ENCODE measurements at regions of chr5 and their contacts with region 1.

Region 1: GRCh38 chr5:127186657-127187056 is 103.9 kb upstream of the MEGF10 start:
- DNase-seq: peak; percentile 10
- H3K4me3 ChIP-seq: no peak overlapping the region
- H3K27ac ChIP-seq: no peak overlapping the region
- H3K4me1 ChIP-seq: no peaks in the 10 kb centered on the region
- H3K27me3 ChIP-seq: no peaks in the 10 kb centered on the region
- CTCF ChIP-seq: no peak

Region 2: DNA sequence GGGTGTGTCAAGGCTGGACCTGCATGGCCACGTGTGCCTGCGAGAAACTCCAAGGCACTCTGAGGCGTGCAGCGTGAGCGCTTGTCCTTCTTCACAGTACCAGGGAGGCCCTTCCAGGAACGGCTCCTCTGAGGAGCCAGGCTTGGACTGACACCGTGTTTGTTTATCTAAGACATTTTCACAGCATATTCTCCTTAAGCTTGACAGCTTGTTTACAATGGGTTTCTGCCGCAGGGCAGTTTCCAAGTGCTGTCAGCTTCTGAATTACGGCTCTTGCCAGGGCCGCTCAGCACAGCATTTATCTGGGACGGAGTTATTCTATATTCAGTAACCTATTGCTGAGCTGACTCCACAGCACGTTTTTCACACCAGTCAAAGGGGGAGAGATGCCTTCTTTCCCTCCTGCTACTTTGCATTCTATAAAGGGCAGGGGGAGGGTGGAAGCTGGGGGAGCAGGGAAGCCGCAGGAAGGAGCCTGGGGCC is 311.3 kb before region 1 on chr5:
- CTCF ChIA-PET with region 1: no interaction called
- dilution Hi-C with region 1: loop called (anchors 10 kb)
- in situ Hi-C with region 1: no loop called
- intact Hi-C with region 1: no loop called
- DNase-seq: no peak
- H3K4me3 ChIP-seq: no peak overlapping the region
- H3K27ac ChIP-seq: no peak overlapping the region
- H3K4me1 ChIP-seq: no peaks in the 10 kb centered on the region
- H3K27me3 ChIP-seq: no peaks in the 10 kb centered on the region
- CTCF ChIP-seq: no peak

Region 3: DNA sequence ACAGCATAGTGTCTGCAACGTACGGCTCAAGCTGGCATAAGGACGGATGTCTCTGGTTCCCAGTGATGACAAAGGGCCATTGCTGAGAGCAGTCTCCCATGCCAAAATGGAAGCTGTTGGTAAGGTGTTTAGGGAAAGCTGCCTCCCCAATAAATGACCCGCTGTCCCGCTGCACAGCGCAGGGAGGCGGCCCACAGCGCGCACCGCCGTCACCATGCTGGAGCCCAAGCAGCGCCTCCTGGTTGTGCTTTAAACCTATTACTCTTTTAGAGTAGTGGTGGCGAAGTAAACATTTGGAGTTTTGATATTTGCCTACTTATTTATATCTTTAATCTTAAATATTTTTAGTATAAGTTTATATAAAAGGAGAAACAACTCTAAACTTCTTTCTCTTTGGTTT is 42.9 kb before region 1 on chr5:
- CTCF ChIA-PET with region 1: no interaction called
- dilution Hi-C with region 1: loop called (anchors 5 kb)
- in situ Hi-C with region 1: no loop called
- intact Hi-C with region 1: no loop called
- DNase-seq: no peak
- H3K4me3 ChIP-seq: no peak overlapping the region
- H3K27ac ChIP-seq: no peak overlapping the region
- H3K4me1 ChIP-seq: no peaks in the 10 kb centered on the region
- H3K27me3 ChIP-seq: peaks cover 3% of the 10 kb centered on the region
- CTCF ChIP-seq: no peak

Region 4: GRCh38 chr5:127163750-127164149 is 22.9 kb before region 1 on chr5:
- CTCF ChIA-PET with region 1: no interaction called
- dilution Hi-C with region 1: no loop called
- in situ Hi-C with region 1: no loop called
- intact Hi-C with region 1: loop called (anchors 1 kb)
- DNase-seq: no peak
- H3K4me3 ChIP-seq: no peak overlapping the region
- H3K27ac ChIP-seq: no peak overlapping the region
- H3K4me1 ChIP-seq: no peaks in the 10 kb centered on the region
- H3K27me3 ChIP-seq: no peaks in the 10 kb centered on the region
- CTCF ChIP-seq: no peak

Region 5: GRCh38 chr5:127223256-127223974 is 36.8 kb after region 1 on chr5:
- CTCF ChIA-PET with region 1: no interaction called
- dilution Hi-C with region 1: loop called (anchors 5 kb)
- in situ Hi-C with region 1: no loop called
- intact Hi-C with region 1: no loop called
- DNase-seq: no peak
- H3K4me3 ChIP-seq: no peak overlapping the region
- H3K27ac ChIP-seq: no peak overlapping the region
- H3K4me1 ChIP-seq: no peaks in the 10 kb centered on the region
- H3K27me3 ChIP-seq: no peaks in the 10 kb centered on the region
- CTCF ChIP-seq: no peak

Measured in mammary epithelial cell (primary cell).